Panc1 (cell line): ENCODE measurements at regions of chr7 and their contacts with region 1.

Region 1: DNA sequence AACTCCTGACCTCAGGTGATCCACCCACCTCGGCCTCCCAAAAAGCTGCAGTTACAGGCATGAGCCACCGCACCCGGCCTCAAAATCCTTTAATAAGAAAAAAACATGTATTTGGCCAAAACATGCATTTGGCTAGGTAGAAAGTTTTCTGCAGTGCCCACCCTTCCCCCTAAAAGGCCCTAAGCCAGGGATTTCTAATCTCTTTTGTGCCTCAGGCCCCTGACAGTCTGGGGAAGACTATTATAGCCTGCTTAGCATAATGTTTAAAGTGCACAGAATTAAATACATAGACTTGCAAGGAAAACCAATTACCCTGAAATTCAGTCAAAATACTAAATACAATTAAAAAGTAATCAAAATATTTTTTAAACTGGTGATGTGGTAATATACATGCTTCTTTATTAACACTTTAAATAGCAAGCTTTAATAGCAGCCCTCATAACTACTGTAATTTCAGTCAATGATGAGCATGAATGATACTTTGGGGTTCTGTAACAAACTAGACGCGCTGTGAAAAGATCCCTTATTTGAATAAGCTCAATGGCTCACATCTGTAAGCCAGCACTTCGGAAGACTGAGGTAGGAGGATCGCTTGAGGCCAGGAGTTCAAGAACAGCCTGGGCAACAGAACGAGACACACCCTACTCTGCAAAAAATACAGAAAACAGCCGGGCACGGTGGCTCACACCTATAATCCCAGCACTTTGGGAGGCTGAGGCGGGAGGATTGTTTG is 29.9 kb downstream of the SPDYE6 start:
- DNase-seq: no peak
- ATAC-seq: no peak
- H3K4me3 ChIP-seq: no peak overlapping the region
- H3K27ac ChIP-seq: no peak overlapping the region
- H3K4me1 ChIP-seq: no peaks in the 10 kb centered on the region
- H3K27me3 ChIP-seq: no peaks in the 10 kb centered on the region
- CTCF ChIP-seq: no peak

Region 2: DNA sequence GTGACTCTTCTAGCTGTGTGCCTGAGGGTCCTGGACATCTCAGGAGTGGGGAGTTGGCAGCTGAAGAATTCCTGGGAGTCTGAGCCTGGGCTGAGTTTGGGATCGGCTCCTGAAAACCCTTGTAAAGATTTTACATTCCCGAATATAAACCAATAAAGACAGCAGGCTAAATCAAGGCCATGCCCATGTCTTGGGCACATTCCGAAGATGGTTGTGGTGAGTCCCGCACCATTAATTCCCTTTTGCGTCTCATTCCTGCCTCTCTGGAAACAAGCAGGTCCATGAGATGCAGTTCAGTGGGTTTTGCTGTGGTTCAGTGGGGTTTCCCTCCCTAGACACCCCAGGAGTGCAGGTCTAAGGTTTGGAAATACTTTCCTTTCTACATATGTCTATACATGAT is 872.7 kb before region 1 on chr7:
- CTCF ChIA-PET with region 1: no interaction called
- POLR2A ChIA-PET with region 1: no interaction called
- in situ Hi-C with region 1: no loop called
- intact Hi-C with region 1: no loop called
- DNase-seq: no peak
- ATAC-seq: peak; percentile 58
- H3K4me3 ChIP-seq: no peak overlapping the region
- H3K27ac ChIP-seq: peak overlapping the region; percentile 67
- H3K4me1 ChIP-seq: peaks cover 9% of the 10 kb centered on the region
- H3K27me3 ChIP-seq: no peaks in the 10 kb centered on the region
- CTCF ChIP-seq: no peak

Region 3: GRCh38 chr7:102310414-102310815 is 15.9 kb before region 1 on chr7:
- CTCF ChIA-PET with region 1: no interaction called
- POLR2A ChIA-PET with region 1: no interaction called
- in situ Hi-C with region 1: no loop called
- intact Hi-C with region 1: no loop called
- DNase-seq: no peak
- ATAC-seq: no peak
- H3K4me3 ChIP-seq: no peak overlapping the region
- H3K27ac ChIP-seq: no peak overlapping the region
- H3K4me1 ChIP-seq: peaks cover 3% of the 10 kb centered on the region; the same call in 1 of the 2 replicates
- H3K27me3 ChIP-seq: no peaks in the 10 kb centered on the region
- CTCF ChIP-seq: no peak

Region 4: DNA sequence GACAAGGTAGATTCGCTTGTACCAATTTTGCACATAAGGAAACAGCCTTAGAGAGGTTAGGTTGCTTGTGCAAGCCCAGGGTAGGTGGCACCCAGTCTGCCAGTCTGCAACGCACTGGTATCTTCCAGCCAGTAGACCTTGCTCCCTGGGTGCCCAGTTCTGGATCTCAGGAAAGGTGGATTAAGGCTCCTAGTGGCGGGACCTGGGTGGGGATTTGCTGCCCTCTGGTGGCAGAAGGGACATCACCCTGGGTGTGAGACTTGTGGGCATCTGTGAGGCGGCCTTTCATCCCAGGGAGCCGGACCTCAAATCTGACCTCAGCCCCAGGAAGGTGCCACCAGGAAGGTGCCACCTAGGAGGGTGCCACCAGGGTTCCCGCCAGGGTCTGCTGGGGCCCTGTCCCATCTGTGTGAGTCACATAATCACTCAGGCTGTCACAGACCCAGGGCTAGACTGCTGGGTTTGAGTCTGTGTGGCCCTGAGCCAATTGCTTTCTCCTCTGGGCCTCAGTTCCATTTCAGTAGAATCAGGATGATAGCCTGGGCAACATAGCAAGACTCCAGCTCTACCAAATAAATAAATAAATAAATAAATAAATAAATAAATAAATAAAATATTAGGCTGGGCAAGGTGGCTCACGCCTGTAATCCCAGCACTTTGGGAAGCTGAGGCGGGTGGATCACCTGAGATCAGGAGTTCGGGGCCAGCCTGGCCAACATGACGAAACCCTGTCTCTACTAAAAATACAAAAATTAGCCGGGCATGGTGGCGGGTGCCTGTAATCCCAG is 64.6 kb after region 1 on chr7:
- CTCF ChIA-PET with region 1: no interaction called
- POLR2A ChIA-PET with region 1: no interaction called
- in situ Hi-C with region 1: no loop called
- intact Hi-C with region 1: loop called (anchors 10 kb)
- DNase-seq: peak; percentile 60
- ATAC-seq: peak; percentile 97
- H3K4me3 ChIP-seq: no peak overlapping the region
- H3K27ac ChIP-seq: no peak overlapping the region
- H3K4me1 ChIP-seq: no peaks in the 10 kb centered on the region
- H3K27me3 ChIP-seq: no peaks in the 10 kb centered on the region
- CTCF ChIP-seq: peak; percentile 96